Heart right ventricle (tissue), 16 donors: ENCODE measurements at regions of chrX and their contacts with region 1.

Region 1: DNA sequence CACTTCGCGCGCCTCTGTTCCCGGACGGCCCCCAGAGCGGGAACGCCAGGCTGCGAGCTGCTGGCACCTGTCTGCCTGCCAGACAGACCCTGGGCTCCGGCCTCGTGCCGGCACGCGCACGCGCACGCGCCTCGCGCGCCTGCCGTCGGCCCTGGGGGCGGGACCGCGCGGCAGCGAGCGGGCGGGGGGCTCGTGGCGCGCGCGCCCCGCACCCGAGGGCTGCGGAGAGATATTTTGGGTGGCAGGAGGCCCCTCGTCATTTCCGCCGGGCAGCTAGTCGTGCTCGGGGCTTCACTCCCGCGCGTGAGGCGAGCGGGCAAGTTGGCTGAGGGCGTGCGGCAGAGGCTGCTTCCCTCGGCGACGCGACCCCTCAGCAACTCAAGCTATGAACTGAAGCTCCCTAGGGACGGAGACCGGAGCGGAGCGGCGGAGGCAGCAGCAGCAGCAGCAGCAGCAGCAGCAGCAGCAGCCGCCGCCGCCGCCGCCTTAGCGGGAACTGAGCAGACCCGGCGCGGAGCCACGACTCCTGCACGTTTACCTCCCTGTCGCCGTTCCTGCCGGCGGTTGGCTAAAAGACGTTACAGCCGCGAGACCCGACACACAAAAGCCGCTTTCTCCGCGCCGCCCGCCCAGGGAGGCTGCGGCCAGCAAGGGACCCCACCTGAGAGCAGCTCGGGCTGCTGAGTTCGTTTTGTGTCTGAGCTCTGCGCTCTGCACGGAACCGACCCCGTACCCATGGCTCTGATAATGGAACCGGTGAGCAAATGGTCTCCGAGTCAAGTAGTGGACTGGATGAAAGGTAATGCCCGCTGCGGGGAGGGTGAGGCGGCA is at the start of gene CNKSR2:
- DNase-seq: peak in 1 of 2 donors; percentile 12
- ATAC-seq: peak in 6 of 8 donors; percentile 21 to 74 (median 41)
- H3K4me3 ChIP-seq: peak within 1 kb of the TSS in 9 of 10 donors; percentile 31 to 60 (median 54)
- H3K27ac ChIP-seq: peak within 1 kb of the TSS in 2 of 10 donors; percentile 7 to 26
- H3K4me1 ChIP-seq: peaks cover 0 to 11% (median 0%) of the 10 kb centered on the region in 9 donors
- H3K27me3 ChIP-seq: peaks cover 0 to 56% (median 13%) of the 10 kb centered on the region in 7 donors
- CTCF ChIP-seq: no peak
- total RNA-seq, gene CNKSR2: 0.25 to 1.6 (median 0.50) TPM

Region 2: DNA sequence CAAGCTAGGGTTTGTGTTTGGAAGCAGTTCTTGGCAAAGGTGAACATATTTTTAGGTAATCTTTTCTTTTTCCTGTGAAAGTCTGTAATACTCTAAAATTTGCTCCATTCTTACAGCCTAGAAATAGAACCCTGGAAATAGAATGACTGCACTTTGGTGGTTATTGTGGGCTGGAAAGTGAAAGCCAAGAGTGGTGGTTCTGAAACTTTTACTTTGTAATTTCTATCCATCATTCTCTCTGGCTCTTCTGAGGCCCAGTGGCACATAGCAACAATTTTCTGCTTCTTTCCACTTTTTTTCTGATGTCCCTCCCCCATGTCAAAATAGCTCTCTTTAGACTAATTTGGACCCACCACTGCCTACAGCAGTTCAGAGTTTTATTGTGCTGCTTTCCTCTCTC is 807.3 kb before region 1 on chrX:
- intact Hi-C with region 1: no loop called
- DNase-seq: no peak
- ATAC-seq: no peak
- H3K4me3 ChIP-seq: no peak overlapping the region
- H3K27ac ChIP-seq: no peak overlapping the region
- H3K4me1 ChIP-seq: no peaks in the 10 kb centered on the region
- H3K27me3 ChIP-seq: peaks cover 0 to 4% (median 0%) of the 10 kb centered on the region in 7 donors
- CTCF ChIP-seq: no peak

Region 3: GRCh38 chrX:21394792-21395191 is 20.4 kb after region 1 on chrX:
- intact Hi-C with region 1: loop called in 1 of 10 experiments (anchors 2 kb)
- DNase-seq: no peak
- ATAC-seq: no peak
- H3K4me3 ChIP-seq: no peak overlapping the region
- H3K27ac ChIP-seq: no peak overlapping the region
- H3K4me1 ChIP-seq: no peaks in the 10 kb centered on the region
- H3K27me3 ChIP-seq: no peaks in the 10 kb centered on the region
- CTCF ChIP-seq: no peak

Region 4: GRCh38 chrX:21469071-21469470 is 94.7 kb after region 1 on chrX:
- intact Hi-C with region 1: no loop called
- DNase-seq: no peak
- ATAC-seq: no peak
- H3K4me3 ChIP-seq: no peak overlapping the region
- H3K27ac ChIP-seq: no peak overlapping the region
- H3K4me1 ChIP-seq: no peaks in the 10 kb centered on the region
- H3K27me3 ChIP-seq: no peaks in the 10 kb centered on the region
- CTCF ChIP-seq: no peak